ENCODE measurements at regions of chr4 and their contacts with region 1.

Region 1: GRCh38 chr4:16875487-16875886 is 23.0 kb downstream of the LDB2 start:
- DNase-seq: no peak
- H3K4me3 ChIP-seq: no peak overlapping the region
- H3K27ac ChIP-seq: no peak overlapping the region
- H3K4me1 ChIP-seq: no peaks in the 10 kb centered on the region
- H3K27me3 ChIP-seq: no peaks in the 10 kb centered on the region
- CTCF ChIP-seq: no peak
- EP300 ChIP-seq: no peak
- POLR2A ChIP-seq: no peak

Region 2: DNA sequence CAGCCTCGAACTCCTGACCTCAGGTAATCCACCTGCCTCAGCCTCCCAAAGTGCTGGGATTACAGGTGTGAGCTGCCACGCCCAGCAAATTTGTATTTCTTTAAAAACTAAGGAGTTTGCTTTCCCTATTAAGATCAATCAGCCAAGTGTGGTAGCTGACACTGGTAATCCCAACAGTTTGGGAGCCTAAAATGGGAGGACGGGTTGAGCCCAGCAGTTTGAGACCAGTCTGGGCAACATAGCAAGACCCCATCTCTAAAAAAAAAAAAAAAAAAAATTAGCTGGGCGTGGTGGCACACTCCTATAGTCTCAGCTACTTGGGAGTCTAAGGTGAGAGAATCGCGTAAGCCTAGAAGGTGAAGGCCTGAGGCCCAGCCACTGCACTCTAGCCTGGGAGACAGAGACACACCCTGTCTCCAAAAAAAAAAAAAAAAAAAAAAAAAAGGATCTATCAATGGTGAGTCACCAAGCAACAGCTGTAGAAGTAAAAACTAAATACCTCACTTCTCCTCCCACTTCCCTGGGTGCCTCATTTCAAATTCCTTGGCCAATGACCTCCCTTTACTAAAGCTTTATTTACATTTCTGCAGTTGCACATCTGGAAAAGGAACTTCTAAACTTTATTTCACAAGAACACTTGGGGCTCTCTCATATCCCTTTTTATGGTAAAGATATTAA is 31.5 kb before region 1 on chr4:
- intact Hi-C with region 1: loop called in 1 of 4 experiments (anchors 1 kb)
- DNase-seq: no peak
- H3K4me3 ChIP-seq: no peak overlapping the region
- H3K27ac ChIP-seq: no peak overlapping the region
- H3K4me1 ChIP-seq: peaks cover 7% of the 10 kb centered on the region
- H3K27me3 ChIP-seq: no peaks in the 10 kb centered on the region
- CTCF ChIP-seq: no peak
- EP300 ChIP-seq: no peak
- POLR2A ChIP-seq: no peak

Region 3: DNA sequence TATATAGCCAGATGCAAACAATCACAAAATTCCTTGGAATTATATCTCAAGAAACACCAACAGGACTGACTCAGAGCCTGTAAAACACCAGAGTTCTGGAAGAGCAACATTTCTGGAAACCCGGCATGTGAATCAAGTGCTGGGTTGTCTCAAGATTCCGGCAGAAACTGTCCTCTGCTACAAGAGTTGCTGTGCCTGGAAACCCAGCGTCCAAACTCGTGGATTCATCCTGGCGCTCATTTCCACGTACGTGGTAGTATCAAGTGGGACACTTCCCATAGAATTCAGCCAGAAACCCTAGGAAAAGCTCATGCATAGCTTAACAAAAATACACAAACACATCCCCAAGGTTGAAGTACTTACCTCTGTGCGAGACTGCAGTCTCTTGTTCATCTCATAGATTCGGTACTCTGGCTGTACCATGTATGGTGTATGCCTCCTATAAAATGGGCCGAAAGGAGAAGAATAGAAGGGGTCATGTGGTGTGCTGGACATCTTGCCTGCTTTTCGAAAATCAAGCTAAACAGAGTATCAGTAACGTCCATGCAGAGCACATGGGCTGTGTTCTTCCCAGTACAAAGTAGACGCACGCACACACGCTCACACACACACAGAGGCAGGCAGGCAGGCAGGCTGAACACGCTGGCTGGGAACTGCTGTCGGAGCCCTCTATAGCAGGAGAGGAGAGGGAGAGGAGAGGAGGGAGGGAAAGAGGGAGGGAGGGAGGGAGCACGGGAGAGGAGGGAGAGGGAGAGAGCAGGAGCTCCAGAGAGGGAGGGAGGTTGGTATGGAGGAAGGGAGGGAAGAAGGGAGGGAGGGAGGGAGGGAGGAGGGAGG is 22.7 kb after region 1 on chr4 and contains the start of gene LDB2:
- intact Hi-C with region 1: no loop called
- DNase-seq: peak; percentile 75 to 83 (median 81)
- H3K4me3 ChIP-seq: peak within 1 kb of the TSS; percentile 40
- H3K27ac ChIP-seq: peak within 1 kb of the TSS in 1 of 2 donors; percentile 46
- H3K4me1 ChIP-seq: peaks cover 3% of the 10 kb centered on the region
- H3K27me3 ChIP-seq: no peaks in the 10 kb centered on the region
- CTCF ChIP-seq: no peak
- EP300 ChIP-seq: no peak
- POLR2A ChIP-seq: no peak
- total RNA-seq, gene LDB2: 17.0 to 69.2 (median 24.1) TPM

Region 4: GRCh38 chr4:17008834-17009345 is 133.4 kb after region 1 on chr4:
- intact Hi-C with region 1: no loop called
- DNase-seq: no peak
- H3K4me3 ChIP-seq: no peak overlapping the region
- H3K27ac ChIP-seq: no peak overlapping the region
- H3K4me1 ChIP-seq: no peaks in the 10 kb centered on the region
- H3K27me3 ChIP-seq: no peaks in the 10 kb centered on the region
- CTCF ChIP-seq: no peak
- EP300 ChIP-seq: no peak
- POLR2A ChIP-seq: no peak

Measured in ovary (tissue), 10 donors.